ENCODE measurements at regions of chr10 and their contacts with region 1.

Region 1: DNA sequence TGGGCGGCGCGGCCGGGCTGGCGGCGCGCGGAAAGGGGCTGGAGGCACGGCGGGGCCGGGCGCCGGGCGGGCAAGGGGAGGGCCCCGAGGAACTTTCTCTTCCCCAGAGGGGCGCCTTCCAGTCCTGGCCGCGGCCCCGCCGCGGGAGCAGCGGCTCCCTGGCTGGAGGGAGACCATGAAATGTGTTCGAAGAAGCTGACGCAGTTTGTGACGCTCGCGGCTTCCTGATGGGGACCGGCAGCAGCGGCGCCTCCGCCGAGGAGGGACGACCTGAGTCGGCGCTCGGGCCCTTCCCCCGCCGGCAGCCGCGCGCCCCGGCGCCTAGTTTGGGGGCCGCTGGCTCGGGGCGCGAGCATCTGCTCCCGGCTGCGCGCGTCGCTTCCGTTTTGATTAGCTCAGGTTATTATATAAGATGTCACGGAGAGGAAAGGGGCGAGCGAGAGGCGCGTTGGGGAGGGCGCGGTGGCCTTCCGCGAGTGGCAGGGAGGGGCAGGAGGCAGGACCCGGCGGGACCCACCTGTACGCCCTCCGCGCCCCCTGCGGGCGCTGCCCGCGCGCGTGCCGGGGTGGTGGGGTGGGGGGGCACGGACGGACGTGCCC is 57.1 kb upstream of the PCGF5 start:
- DNase-seq: peak; percentile 14 to 86 (median 73)

Region 2: DNA sequence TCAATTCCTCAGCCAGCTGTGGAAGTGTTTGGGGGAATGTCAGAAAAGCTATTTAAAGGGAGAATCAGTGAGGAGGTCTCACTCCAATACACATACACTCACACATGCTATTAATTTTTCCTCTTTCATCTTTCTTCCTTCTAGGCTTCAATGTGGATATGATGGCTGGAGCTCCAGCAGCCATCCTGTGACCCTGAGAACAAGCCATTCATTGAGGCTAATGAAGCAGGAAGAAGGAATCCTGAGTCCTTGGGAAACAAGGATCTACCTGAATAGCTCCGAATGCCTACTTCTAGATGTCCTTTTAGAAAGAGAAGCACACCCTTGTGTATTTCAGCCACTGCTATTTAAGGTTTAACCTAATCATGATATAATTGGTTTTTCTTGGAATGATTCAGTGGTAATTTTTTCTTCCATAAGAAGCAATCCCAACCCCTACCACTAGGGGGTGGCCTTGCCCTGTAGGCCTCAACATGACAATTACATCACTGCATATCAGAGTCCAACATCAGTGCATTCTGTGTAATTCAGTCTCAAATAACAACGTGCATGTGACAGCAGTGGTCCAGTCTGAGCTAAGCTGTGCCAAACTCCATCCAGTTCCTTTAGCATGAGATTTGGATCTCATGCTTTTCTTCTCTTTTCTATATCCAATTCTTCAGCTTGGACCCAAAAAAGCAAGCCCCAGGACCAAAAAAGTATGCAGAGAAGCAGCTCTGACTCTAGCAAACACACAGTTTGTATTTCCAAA is 157.2 kb before region 1 on chr10:
- intact Hi-C with region 1: loop called (anchors 10 kb)
- DNase-seq: peak; percentile 10 to 92 (median 68)

Region 3: GRCh38 chr10:91220194-91220953 is 57.0 kb after region 1 on chr10 and contains the start of gene PCGF5:
- intact Hi-C with region 1: loop called (anchors 10 kb)
- DNase-seq: peak; percentile 65 to 95 (median 88)

Measured in head of caudate nucleus (tissue), 42 donors.